Cardiac septum (tissue), 1 donor: ENCODE measurements at regions of chr2 and their contacts with region 1.

Region 1: DNA sequence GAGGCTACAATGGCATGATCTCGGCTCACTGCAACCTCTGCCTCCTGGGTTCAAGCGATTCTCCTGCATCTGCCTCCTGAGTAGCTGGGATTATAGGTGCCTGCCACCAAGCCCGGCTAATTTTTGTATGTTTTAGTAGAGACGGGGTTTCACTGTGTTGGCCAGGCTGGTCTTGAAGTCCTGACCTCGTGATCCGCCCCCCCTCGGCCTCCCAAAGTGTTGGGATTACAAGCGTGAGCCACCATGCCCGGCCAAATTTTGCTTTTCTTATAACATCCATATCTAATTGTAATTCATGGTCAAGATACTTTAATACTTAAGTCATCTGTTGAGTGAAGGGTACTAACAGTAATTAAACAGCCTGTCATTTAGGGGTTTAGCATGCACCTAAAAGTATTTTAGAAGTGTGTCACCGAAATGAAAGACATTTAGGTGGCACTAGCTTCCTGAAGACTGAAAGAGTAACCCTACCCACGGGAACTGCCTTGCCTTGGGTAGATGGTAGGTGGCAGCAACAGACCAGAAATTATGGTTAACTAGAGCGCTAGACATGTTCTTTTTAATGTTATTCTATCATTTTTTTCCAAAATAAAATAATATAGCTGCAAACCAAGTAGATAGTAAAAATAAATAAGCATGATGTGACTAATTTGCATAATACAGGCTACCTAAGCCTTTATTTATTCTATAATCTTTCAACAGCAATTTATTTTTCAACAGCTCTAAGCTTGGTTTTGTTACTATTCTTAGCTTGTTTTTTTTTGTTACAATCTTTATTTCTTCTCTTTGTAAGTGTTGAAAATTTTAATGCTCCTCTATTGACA is 8.6 kb upstream of the ACYP2 start:
- DNase-seq: no peak

Region 2: GRCh38 chr2:54838585-54839035 is 731.8 kb after region 1 on chr2:
- intact Hi-C with region 1: loop called (anchors 10 kb)
- DNase-seq: no peak